MCF 10A (cell line): ENCODE measurements at regions of chr1 and their contacts with region 1.

Region 1: DNA sequence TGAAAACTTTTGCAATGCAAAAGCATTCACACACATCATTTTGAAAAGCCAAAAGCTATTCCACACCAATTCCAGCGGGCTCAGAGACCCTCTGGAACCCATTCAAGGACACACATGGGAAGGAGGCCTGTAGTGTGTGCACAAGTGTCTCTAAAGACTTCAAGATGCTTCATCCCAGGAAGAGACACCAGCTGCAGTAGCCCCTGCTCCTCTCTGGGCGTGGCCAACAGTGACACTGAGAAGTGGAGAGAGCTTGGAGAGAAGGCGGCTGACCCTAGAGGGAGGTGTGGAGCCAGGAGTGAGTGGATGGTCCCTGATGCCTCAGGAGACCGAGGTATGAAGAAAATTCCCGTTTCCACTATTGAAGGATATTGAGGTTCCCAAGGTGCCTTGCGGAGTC is 14.9 kb upstream of the TNNI1 start:
- DNase-seq: peak; percentile 38
- H3K4me3 Mint-ChIP-seq: no peak overlapping the region
- H3K27ac Mint-ChIP-seq: no peak overlapping the region
- H3K4me1 Mint-ChIP-seq: peaks cover 12% of the 10 kb centered on the region
- H3K27me3 Mint-ChIP-seq: no peaks in the 10 kb centered on the region
- CTCF ChIP-seq: no peak

Region 2: DNA sequence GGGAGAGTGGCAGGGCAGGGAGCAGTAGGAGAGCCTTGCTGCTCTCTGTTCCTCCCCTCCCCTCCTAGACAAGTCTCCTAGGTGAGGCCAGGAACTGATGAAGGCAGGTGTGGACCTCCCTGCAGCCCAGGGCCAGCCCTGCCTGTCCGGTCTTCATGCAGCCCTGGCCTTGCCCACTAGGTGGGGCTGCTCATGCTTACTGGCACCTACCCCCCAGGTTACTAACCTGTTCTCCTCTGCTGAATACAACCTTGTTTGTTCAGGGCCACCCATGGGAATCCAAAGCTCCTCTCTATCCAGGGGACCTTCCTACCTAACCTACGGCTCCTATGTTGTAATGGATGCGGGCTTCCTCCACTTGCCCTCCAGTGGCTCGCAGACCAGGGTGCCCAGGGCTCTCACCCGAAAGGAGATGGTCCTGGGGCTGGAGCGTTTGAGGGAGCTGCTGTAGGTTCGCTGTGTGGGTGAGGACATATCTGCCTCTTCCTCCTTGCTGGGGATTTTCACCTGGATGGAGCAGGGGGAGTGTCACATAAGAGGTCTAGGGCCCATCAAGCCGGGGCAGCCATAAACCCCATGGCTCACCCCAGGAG is 51.0 kb before region 1 on chr1:
- CTCF ChIA-PET with region 1: interaction called, 17 read pairs
- POLR2A ChIA-PET with region 1: interaction called, 5 read pairs
- intact Hi-C with region 1: no loop called
- DNase-seq: peak; percentile 80
- H3K4me3 Mint-ChIP-seq: no peak overlapping the region
- H3K27ac Mint-ChIP-seq: no peak overlapping the region
- H3K4me1 Mint-ChIP-seq: peaks cover 19% of the 10 kb centered on the region
- H3K27me3 Mint-ChIP-seq: no peaks in the 10 kb centered on the region
- CTCF ChIP-seq: peak; percentile 99

Region 3: GRCh38 chr1:201408176-201408833 is 28.1 kb before region 1 on chr1:
- CTCF ChIA-PET with region 1: interaction called, 22 read pairs
- POLR2A ChIA-PET with region 1: interaction called, 4 read pairs
- intact Hi-C with region 1: no loop called
- DNase-seq: peak; percentile 90
- H3K4me3 Mint-ChIP-seq: no peak overlapping the region
- H3K27ac Mint-ChIP-seq: no peak overlapping the region
- H3K4me1 Mint-ChIP-seq: peaks cover 5% of the 10 kb centered on the region
- H3K27me3 Mint-ChIP-seq: peaks cover 32% of the 10 kb centered on the region
- CTCF ChIP-seq: peak; percentile 100

Region 4: GRCh38 chr1:201447911-201448871 is 11.8 kb after region 1 on chr1:
- CTCF ChIA-PET with region 1: interaction called, 116 read pairs
- POLR2A ChIA-PET with region 1: interaction called, 26 read pairs
- intact Hi-C with region 1: no loop called
- DNase-seq: peak; percentile 89
- H3K4me3 Mint-ChIP-seq: no peak overlapping the region
- H3K27ac Mint-ChIP-seq: peak overlapping the region; percentile 36
- H3K4me1 Mint-ChIP-seq: peaks cover 8% of the 10 kb centered on the region
- H3K27me3 Mint-ChIP-seq: no peaks in the 10 kb centered on the region
- CTCF ChIP-seq: peak; percentile 98

Region 5: GRCh38 chr1:201463071-201463552 is 26.7 kb after region 1 on chr1:
- CTCF ChIA-PET with region 1: interaction called, 153 read pairs
- POLR2A ChIA-PET with region 1: interaction called, 1,388 read pairs
- intact Hi-C with region 1: loop called (anchors 2 kb)
- DNase-seq: peak; percentile 74
- H3K4me3 Mint-ChIP-seq: peak overlapping the region; percentile 97
- H3K27ac Mint-ChIP-seq: peak overlapping the region; percentile 93
- H3K4me1 Mint-ChIP-seq: peaks cover 65% of the 10 kb centered on the region
- H3K27me3 Mint-ChIP-seq: no peaks in the 10 kb centered on the region
- CTCF ChIP-seq: peak; percentile 37

Region 6: DNA sequence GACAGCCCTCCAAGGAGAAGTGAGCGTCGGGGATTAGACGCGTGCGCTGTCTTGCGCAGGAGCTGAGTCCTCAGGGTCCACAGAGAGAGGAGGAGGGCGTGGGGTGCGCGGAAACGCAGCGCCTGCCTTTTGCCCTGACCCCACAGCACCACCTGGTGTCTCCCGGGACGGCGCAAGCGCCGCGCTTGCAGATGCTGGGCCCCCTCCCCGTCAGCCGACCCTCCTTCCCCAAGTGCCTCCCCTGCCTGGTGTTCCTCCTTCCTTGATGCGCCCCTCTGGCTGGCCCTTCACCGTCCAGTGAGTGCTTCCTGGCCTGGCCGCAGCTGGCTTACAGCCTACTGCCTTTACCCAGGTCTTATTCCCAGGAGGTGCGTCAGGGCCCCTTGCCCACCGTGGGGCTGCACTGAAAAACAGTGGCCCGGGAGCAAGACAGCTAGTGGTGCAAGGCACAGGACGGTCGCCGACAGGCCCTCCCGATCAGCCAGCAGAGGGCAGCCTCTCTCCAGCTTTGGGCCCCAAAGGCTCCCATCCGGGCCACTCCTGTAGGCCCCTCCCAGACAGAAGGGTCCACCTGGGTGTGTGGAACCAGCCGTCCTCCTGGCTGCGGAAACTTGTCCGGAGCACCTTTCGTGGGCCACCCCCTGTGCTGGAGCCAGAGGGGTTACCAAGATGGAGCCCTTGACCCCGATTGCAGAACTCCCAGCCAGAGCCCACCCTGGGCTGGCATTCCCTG is 45.5 kb after region 1 on chr1:
- CTCF ChIA-PET with region 1: interaction called, 3,816 read pairs
- POLR2A ChIA-PET with region 1: interaction called, 1,388 read pairs
- intact Hi-C with region 1: loop called (anchors 1 kb)
- DNase-seq: peak; percentile 94
- H3K4me3 Mint-ChIP-seq: peak overlapping the region; percentile 0
- H3K27ac Mint-ChIP-seq: no peak overlapping the region
- H3K4me1 Mint-ChIP-seq: peaks cover 33% of the 10 kb centered on the region
- H3K27me3 Mint-ChIP-seq: no peaks in the 10 kb centered on the region
- CTCF ChIP-seq: peak; percentile 100

Region 7: GRCh38 chr1:201511941-201512539 is 75.6 kb after region 1 on chr1:
- CTCF ChIA-PET with region 1: interaction called, 3,816 read pairs
- POLR2A ChIA-PET with region 1: interaction called, 16 read pairs
- intact Hi-C with region 1: loop called (anchors 1 kb)
- DNase-seq: no peak
- H3K4me3 Mint-ChIP-seq: no peak overlapping the region
- H3K27ac Mint-ChIP-seq: peak overlapping the region; percentile 31
- H3K4me1 Mint-ChIP-seq: peaks cover 7% of the 10 kb centered on the region
- H3K27me3 Mint-ChIP-seq: no peaks in the 10 kb centered on the region
- CTCF ChIP-seq: no peak